ENCODE measurements at regions of chr17 and their contacts with region 1.

Region 1: GRCh38 chr17:67717624-67718329 is at the start of gene NOL11:
- DNase-seq: peak; percentile 98
- H3K4me3 ChIP-seq: peak within 1 kb of the TSS; percentile 97
- H3K27ac ChIP-seq: peak within 1 kb of the TSS; percentile 90
- H3K27me3 ChIP-seq: no peaks in the 10 kb centered on the region
- CTCF ChIP-seq: peak; percentile 94
- polyA plus RNA-seq, gene NOL11: 35.5 and 47.4 TPM in 2 replicates

Region 2: DNA sequence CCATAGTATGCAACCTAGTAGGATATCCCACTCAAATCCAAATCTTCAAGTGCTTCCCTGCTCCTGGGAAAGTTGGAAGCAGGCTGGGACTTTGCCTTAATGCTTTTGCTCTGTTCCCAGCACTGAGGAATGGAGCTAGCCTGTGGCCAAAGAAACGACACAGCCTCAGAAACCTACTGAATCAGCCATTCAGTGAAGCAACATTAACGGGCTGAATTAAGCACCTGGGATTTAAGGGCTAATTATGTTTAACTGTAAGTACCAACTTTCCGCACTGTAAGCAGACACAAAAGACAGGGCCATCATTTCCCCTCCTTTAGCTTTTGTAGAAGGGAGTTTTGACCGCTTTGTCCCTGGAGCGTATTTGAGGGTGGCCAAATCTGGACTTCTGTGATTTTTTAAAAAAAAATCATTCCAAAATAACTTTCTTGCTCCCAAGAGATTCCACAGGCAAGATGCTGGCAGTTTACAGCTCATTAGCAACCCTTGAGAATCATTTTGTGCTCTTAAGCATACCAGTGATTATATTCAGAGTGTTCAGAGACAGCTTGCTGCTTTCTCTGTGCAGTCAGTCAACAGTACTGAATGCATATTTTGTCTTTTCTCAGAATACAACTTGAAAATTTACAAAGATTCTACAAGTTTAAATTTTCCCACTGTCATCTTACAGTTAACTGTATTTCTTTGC is 17.6 kb before region 1 on chr17:
- CTCF ChIA-PET with region 1: interaction called, 13 read pairs
- POLR2A ChIA-PET with region 1: no interaction called
- DNase-seq: no peak
- H3K4me3 ChIP-seq: no peak overlapping the region
- H3K27ac ChIP-seq: no peak overlapping the region
- H3K27me3 ChIP-seq: no peaks in the 10 kb centered on the region
- CTCF ChIP-seq: no peak

Region 3: DNA sequence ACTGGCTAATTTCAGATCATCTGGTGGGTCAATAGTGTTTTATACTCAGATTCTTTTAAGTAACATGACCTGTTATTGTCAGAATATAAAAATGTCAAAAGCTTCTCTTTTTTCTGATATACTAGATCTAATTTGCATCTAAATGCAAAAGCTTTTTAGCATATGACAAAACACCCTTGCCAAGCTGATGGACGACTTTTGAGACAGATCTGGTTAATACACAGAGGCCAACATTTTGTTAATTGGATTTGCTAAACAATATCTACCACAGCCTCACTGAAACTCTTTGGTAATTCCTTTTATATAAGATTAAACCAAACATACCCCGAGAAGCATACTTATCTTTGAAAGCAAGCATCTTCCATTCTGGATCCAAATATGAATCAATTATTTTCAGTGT is 10.3 kb before region 1 on chr17:
- CTCF ChIA-PET with region 1: interaction called, 16 read pairs
- POLR2A ChIA-PET with region 1: no interaction called
- DNase-seq: no peak
- H3K4me3 ChIP-seq: no peak overlapping the region
- H3K27ac ChIP-seq: no peak overlapping the region
- H3K27me3 ChIP-seq: no peaks in the 10 kb centered on the region
- CTCF ChIP-seq: no peak